Activated CD4-positive, alpha-beta T cell treated with anti-CD3 and anti-CD28 coated beads, Interleukin-2, amount 10 ng/mL, durations not matched to agents 7 days and 5 days (primary cell): ENCODE measurements at regions of chr7 and their contacts with region 1.

Region 1: GRCh38 chr7:100586266-100587025 is at the start of gene FBXO24:
- DNase-seq: peak; percentile 100
- H3K4me3 Mint-ChIP-seq: peak within 1 kb of the TSS; percentile 92
- H3K27ac Mint-ChIP-seq: peak within 1 kb of the TSS; percentile 92
- H3K4me1 Mint-ChIP-seq: peaks cover 27% of the 10 kb centered on the region
- H3K27me3 Mint-ChIP-seq: peaks cover 5% of the 10 kb centered on the region
- total RNA-seq, gene FBXO24: 1.3 to 1.5 TPM

Region 2: GRCh38 chr7:100538654-100539435 is 47.6 kb before region 1 on chr7 and contains the start of gene AGFG2:
- CTCF ChIA-PET with region 1: interaction called, 12 read pairs
- POLR2A ChIA-PET with region 1: no interaction called
- DNase-seq: peak; percentile 100
- H3K4me3 Mint-ChIP-seq: peak within 1 kb of the TSS; percentile 99
- H3K27ac Mint-ChIP-seq: peak within 1 kb of the TSS; percentile 83
- H3K4me1 Mint-ChIP-seq: peaks cover 48% of the 10 kb centered on the region
- H3K27me3 Mint-ChIP-seq: no peaks in the 10 kb centered on the region
- total RNA-seq, gene AGFG2: 43.0 to 45.3 TPM

Region 3: DNA sequence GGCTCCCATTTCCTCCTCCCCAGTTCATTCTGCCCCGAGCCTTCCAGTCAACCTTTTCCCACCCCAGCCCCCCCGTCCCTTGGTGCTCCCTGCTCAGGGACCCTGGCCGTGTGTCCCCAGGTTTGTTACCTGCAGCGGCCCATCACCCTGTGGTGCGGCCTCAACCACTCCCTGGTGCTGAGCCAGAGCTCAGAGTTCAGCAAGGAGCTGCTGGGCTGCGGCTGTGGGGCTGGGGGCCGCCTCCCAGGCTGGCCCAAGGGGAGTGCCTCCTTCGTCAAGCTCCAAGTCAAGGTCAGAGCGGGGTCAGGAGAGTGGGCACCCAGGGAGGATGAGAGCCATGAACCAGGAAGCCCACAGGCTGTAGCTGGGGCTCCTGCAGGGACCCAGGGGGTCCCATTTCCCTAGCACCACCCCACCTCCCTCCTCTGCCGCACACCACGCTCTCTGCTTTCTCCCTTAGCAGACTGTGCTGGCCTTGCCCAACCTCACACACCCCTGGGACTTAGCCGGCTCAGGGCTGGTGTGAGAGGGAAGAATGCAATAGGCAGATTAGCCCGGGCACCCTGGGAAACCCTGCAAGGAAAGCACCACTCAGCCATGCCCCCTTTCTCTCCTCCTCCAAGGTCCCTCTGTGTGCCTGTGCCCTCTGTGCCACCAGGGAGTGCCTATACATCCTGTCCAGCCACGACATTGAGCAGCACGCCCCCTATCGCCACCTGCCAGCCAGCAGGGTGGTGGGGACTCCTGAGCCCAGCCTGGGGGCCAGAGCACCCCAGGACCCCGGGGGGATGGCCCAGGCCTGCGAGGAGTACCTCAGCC is 13.7 kb after region 1 on chr7:
- CTCF ChIA-PET with region 1: interaction called, 14 read pairs
- POLR2A ChIA-PET with region 1: interaction called, 3 read pairs
- DNase-seq: no peak
- H3K4me3 Mint-ChIP-seq: no peak overlapping the region
- H3K27ac Mint-ChIP-seq: no peak overlapping the region
- H3K4me1 Mint-ChIP-seq: peaks cover 31% of the 10 kb centered on the region
- H3K27me3 Mint-ChIP-seq: peaks cover under 1% of the 10 kb centered on the region